ENCODE measurements at regions of chr1 and their contacts with region 1.

Region 1: DNA sequence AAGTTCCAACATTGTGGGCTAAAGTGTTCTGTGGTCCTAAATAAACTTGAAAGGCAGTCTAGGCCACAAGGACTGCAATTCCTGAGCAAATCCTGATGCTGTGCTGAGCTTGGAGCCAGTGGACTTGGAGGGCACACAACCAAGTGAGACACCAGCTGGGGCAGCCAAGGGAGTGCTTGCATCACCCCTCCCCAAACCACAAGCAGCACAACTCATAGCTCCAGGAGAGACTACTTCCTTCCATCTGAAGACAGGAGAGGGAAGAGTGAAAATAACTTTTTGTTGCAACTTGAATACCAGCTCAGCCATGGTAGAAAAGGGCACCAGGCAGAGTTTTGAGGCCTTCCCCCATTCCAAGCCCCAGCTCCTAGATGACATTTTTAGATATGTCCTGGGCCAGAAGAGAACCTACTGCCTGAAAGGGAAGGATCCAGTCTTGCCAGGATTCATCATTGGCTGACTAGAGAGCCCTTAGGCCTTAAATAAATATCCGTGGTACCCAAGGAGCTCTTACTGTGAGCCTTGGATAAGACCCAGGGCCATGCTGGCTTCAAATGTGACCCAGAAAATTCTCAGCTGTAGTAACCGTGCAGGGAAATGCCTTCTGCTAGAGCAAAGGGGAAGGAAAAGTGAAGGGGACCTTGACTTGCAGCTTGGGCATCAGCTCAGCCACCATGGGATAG is 35.4 kb upstream of the LRRC8B start:
- DNase-seq: no peak
- H3K4me3 Mint-ChIP-seq: no peak overlapping the region
- H3K27ac Mint-ChIP-seq: peak overlapping the region; percentile 82
- H3K4me1 Mint-ChIP-seq: peaks cover 35% of the 10 kb centered on the region
- H3K27me3 Mint-ChIP-seq: peaks cover 4% of the 10 kb centered on the region

Region 2: GRCh38 chr1:89358287-89358893 is 130.8 kb before region 1 on chr1:
- intact Hi-C with region 1: no loop called
- DNase-seq: peak; percentile 76
- H3K4me3 Mint-ChIP-seq: peak overlapping the region; percentile 73
- H3K27ac Mint-ChIP-seq: peak overlapping the region; percentile 80
- H3K4me1 Mint-ChIP-seq: peaks cover 69% of the 10 kb centered on the region
- H3K27me3 Mint-ChIP-seq: no peaks in the 10 kb centered on the region

Region 3: GRCh38 chr1:89465201-89465600 is 24.0 kb before region 1 on chr1:
- intact Hi-C with region 1: loop called (anchors 1 kb)
- DNase-seq: no peak
- H3K4me3 Mint-ChIP-seq: no peak overlapping the region
- H3K27ac Mint-ChIP-seq: no peak overlapping the region
- H3K4me1 Mint-ChIP-seq: peaks cover 40% of the 10 kb centered on the region
- H3K27me3 Mint-ChIP-seq: peaks cover 53% of the 10 kb centered on the region

Region 4: GRCh38 chr1:89516055-89516454 is 26.9 kb after region 1 on chr1:
- intact Hi-C with region 1: loop called (anchors 1 kb)
- DNase-seq: no peak
- H3K4me3 Mint-ChIP-seq: no peak overlapping the region
- H3K27ac Mint-ChIP-seq: no peak overlapping the region
- H3K4me1 Mint-ChIP-seq: peaks cover 39% of the 10 kb centered on the region
- H3K27me3 Mint-ChIP-seq: peaks cover 3% of the 10 kb centered on the region